HepG2 (cell line): ENCODE measurements at regions of chr2 and their contacts with region 1.

Region 1: DNA sequence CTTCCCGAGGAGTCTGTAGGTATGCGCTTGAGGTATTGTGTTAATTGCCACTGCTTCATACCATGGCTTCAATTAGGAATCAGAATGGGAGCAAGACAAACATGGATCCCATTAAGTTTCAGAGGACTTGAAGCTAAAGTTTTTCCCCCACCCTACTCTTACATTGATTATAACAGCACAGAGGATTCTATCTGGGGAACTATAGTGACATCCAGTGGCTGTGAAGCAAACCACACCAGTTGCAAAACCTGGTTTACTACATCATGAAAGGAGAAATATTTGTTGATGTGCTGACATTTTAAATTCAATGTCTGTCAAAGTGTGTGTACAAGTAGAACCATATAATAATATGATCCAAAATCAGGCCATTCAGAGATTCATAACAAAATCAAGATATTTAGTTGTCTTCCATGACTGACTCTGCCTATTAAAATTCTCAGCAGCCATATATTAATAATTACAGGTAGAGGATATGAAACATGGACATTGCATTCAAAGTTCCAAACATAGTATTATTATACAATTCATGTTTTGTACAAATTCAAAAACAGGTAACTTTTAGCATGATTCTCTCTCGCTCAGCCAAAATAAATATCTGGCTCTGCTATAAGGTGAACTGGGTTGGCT is 82.9 kb downstream of the GRB14 start:
- DNase-seq: peak; percentile 65
- ATAC-seq: peak; percentile 97
- H3K4me3 ChIP-seq: no peak overlapping the region
- H3K27ac ChIP-seq: no peak overlapping the region
- H3K4me1 ChIP-seq: peaks cover 11% of the 10 kb centered on the region
- H3K27me3 ChIP-seq: no peaks in the 10 kb centered on the region
- CTCF ChIP-seq: peak; percentile 85
- EP300 ChIP-seq: no peak
- POLR2A ChIP-seq: no peak
- RAD21 ChIP-seq: peak; percentile 80

Region 2: GRCh38 chr2:164430166-164430783 is 108.1 kb before region 1 on chr2:
- CTCF ChIA-PET with region 1: no interaction called
- POLR2A ChIA-PET with region 1: no interaction called
- in situ Hi-C with region 1: no loop called
- intact Hi-C with region 1: loop called (anchors 1 kb)
- DNase-seq: peak; percentile 39
- ATAC-seq: peak; percentile 91
- H3K4me3 ChIP-seq: no peak overlapping the region
- H3K27ac ChIP-seq: no peak overlapping the region
- H3K4me1 ChIP-seq: no peaks in the 10 kb centered on the region
- H3K27me3 ChIP-seq: 0 out of 5 replicates have a peak, but pooled peaks cover 0 to 4% of the 10 kb centered on the region in 2 experiments
- CTCF ChIP-seq: peak; percentile 69
- EP300 ChIP-seq: no peak
- POLR2A ChIP-seq: no peak
- RAD21 ChIP-seq: no peak

Region 3: DNA sequence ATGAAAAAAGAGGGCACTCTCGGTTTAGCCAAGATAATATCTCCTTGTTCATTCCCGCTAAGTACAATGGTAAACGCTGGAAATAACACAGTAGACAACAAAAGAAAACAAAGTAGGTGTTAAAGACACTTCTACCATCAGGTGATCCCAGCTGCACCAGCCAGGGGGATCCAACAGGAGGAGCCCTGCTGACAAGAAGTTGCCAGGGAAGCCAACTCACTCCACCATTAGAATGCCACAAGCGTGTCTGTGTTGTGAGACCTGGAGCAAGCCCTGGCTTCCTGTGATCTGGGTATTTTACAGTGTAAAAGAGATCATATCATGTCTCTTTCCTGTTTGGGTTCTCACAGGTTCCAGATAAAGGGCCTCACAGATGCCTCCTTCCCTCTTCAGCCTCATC is 34.1 kb before region 1 on chr2:
- CTCF ChIA-PET with region 1: interaction called, 22 read pairs
- POLR2A ChIA-PET with region 1: no interaction called
- in situ Hi-C with region 1: loop called (anchors 5 kb)
- intact Hi-C with region 1: loop called (anchors 1 kb)
- DNase-seq: peak; percentile 59
- ATAC-seq: peak; percentile 98
- H3K4me3 ChIP-seq: no peak overlapping the region
- H3K27ac ChIP-seq: no peak overlapping the region
- H3K4me1 ChIP-seq: no peaks in the 10 kb centered on the region
- H3K27me3 ChIP-seq: no peaks in the 10 kb centered on the region
- CTCF ChIP-seq: peak; percentile 72
- EP300 ChIP-seq: no peak
- POLR2A ChIP-seq: no peak
- RAD21 ChIP-seq: peak; percentile 62

Region 4: DNA sequence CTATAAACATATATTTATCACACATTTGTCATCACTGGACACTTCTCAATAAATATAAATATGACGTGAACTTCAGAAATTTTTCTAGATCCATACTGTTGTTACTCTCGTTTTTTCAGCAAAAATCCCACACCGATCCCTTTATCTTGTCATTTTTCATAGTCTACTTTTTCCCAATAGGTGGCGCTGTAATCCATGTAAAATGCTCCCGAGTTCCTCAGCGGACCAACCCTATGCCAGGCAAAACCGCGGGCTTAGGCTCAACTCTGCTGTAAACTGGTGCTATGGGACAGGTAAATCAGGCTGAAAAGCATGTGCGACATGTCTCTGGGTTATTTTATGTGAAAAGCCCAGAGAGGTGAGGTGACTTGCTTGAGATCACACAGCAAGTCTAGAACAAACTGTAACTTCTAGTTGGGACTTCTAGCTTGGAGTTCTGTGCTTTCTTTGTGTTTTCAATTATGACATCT is 199.3 kb after region 1 on chr2:
- CTCF ChIA-PET with region 1: no interaction called
- POLR2A ChIA-PET with region 1: no interaction called
- in situ Hi-C with region 1: no loop called
- intact Hi-C with region 1: no loop called
- DNase-seq: peak; percentile 82
- ATAC-seq: peak; percentile 92
- H3K4me3 ChIP-seq: no peak overlapping the region
- H3K27ac ChIP-seq: peak overlapping the region; percentile 22
- H3K4me1 ChIP-seq: peaks cover 82% of the 10 kb centered on the region
- H3K27me3 ChIP-seq: no peaks in the 10 kb centered on the region
- CTCF ChIP-seq: peak; percentile 93
- EP300 ChIP-seq: no peak
- POLR2A ChIP-seq: no peak
- RAD21 ChIP-seq: peak; percentile 93